Endothelial cell of umbilical vein (primary cell): ENCODE measurements at regions of chr22 and their contacts with region 1.

Region 1: GRCh38 chr22:50620593-50621355 is 7.2 kb downstream of the ARSA start:
- DNase-seq: peak; percentile 90
- H3K4me3 ChIP-seq: no peak overlapping the region
- H3K27ac ChIP-seq: no peak overlapping the region
- H3K4me1 ChIP-seq: peaks cover 14% of the 10 kb centered on the region
- H3K27me3 ChIP-seq: no peaks in the 10 kb centered on the region
- CTCF ChIP-seq: no peak
- POLR2A ChIP-seq: no peak

Region 2: GRCh38 chr22:50244420-50245213 is 376.2 kb before region 1 on chr22 and contains the start of gene TUBGCP6:
- CTCF ChIA-PET with region 1: interaction called, 4 read pairs
- POLR2A ChIA-PET with region 1: no interaction called
- dilution Hi-C with region 1: no loop called
- intact Hi-C with region 1: loop called (anchors 1 kb)
- DNase-seq: peak; percentile 88
- H3K4me3 ChIP-seq: peak within 1 kb of the TSS; percentile 55 to 98 (median 90)
- H3K27ac ChIP-seq: peak within 1 kb of the TSS; percentile 73
- H3K4me1 ChIP-seq: peaks cover 26% of the 10 kb centered on the region
- H3K27me3 ChIP-seq: no peaks in the 10 kb centered on the region
- CTCF ChIP-seq: no peak
- POLR2A ChIP-seq: peak; percentile 83
- total RNA-seq, gene TUBGCP6: 41.5 and 45.3 TPM in 2 replicates

Region 3: GRCh38 chr22:50525390-50526068 is 95.2 kb before region 1 on chr22 and contains the start of gene SCO2:
- CTCF ChIA-PET with region 1: interaction called, 21 read pairs
- POLR2A ChIA-PET with region 1: no interaction called
- dilution Hi-C with region 1: no loop called
- intact Hi-C with region 1: loop called (anchors 1 kb)
- DNase-seq: peak; percentile 98
- H3K4me3 ChIP-seq: peak within 1 kb of the TSS; percentile 47 to 66 (median 48)
- H3K27ac ChIP-seq: peak within 1 kb of the TSS; percentile 57
- H3K4me1 ChIP-seq: peaks cover 16% of the 10 kb centered on the region
- H3K27me3 ChIP-seq: peaks cover 0 to 6% of the 10 kb centered on the region in 2 experiments
- CTCF ChIP-seq: peak; percentile 36 to 70
- POLR2A ChIP-seq: peak; percentile 92
- total RNA-seq, gene SCO2: 3.2 and 3.7 TPM in 2 replicates

Region 4: DNA sequence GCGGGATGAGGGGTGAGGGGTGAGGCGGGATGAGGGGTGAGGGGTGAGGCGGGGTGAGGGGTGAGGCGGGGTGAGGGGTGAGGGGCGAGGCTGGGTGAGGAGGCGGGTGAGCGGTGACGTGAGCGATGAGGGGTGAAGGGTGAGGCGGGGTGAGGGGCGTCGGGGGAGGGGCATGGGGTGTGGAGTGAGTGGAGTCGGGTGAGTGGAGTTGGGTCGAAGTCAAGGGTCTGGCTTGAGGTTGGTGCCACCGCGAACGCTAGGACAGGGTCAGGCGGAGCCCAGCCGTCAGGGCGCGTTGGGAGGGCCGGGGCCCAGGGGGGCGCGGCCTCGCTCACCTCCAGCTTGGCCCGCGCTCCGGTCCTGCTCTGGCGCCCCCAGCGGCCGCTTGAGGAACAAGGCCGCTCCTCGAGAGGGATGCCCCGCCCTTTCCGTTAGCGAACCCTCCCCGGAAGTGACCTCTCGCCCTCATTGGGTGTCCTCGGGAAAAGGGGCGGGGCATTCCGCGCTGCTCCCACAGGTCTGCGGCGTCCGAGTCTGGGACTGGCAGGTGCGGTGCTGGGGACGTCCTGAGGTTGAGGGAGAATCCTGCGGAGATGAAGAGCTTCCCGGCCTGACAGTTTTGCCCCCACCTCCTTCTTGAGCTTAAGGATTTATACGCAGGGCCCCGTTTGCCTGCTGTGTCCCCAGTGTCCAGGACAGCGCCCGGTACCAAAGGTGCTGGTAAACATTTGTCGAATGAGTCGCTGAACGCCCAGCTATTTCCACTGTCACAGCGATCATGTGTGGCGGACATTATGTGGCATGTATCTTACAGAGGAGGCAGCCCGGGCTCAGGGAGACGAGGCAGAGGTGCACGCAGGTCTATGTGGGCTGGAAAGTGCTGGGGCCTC is 58.0 kb before region 1 on chr22 and contains the start of gene SYCE3:
- CTCF ChIA-PET with region 1: interaction called, 11 read pairs
- POLR2A ChIA-PET with region 1: no interaction called
- dilution Hi-C with region 1: no loop called
- intact Hi-C with region 1: no loop called
- DNase-seq: peak; percentile 73
- H3K4me3 ChIP-seq: peak within 1 kb of the TSS; percentile 1 to 34 (median 16)
- H3K27ac ChIP-seq: no peak within 1 kb of the TSS
- H3K4me1 ChIP-seq: peaks cover 5% of the 10 kb centered on the region
- H3K27me3 ChIP-seq: peaks cover 8 to 16% of the 10 kb centered on the region in 2 experiments
- CTCF ChIP-seq: peak; percentile 92 to 93
- POLR2A ChIP-seq: no peak
- total RNA-seq, gene SYCE3: not detected in 2 replicates

Region 5: DNA sequence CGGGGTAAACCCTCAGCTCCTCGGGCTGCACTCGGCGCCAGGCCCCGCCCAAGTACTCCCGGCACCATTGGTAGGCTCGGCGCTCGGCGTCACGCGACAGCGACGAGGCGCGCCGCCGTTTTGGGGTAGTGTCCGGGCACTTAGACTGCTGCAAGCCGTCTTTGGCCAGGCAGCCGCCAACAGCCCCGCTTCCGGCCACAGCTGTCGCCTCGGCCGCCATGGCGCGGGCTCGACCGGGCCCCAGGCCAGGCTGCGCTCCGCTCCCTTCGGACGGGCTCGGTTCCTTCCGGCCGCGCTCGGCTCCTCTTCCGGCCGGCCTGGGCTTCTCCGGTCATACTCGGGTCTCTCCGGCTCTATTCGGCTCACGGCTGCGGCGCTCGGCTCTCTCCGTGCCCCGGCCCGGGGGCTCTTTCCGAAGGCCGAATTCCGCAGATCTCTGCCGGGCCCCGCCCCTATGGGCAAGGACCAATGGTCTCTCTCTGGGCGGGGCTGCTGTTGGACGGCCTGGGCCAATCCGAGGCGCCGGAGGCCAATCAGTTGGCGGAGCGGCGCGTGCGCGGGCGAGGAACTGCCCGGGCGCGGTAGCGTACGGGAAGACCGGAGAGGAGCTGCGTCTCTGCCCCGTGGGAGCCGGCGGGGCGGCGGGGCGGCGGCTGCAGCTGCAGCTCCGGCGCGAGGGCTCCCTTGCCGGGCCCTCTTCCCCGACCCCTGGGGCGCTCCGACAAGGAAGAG is 38.0 kb before region 1 on chr22 and contains the start of gene CHKB:
- CTCF ChIA-PET with region 1: interaction called, 91 read pairs
- POLR2A ChIA-PET with region 1: no interaction called
- dilution Hi-C with region 1: no loop called
- intact Hi-C with region 1: no loop called
- DNase-seq: peak; percentile 98
- H3K4me3 ChIP-seq: peak within 1 kb of the TSS; percentile 73 to 87 (median 85)
- H3K27ac ChIP-seq: peak within 1 kb of the TSS; percentile 87
- H3K4me1 ChIP-seq: peaks cover 13% of the 10 kb centered on the region
- H3K27me3 ChIP-seq: peaks cover 0 to 2% of the 10 kb centered on the region in 2 experiments
- CTCF ChIP-seq: no peak
- POLR2A ChIP-seq: peak; percentile 77
- total RNA-seq, gene CHKB: 57.7 and 62.4 TPM in 2 replicates

Region 6: DNA sequence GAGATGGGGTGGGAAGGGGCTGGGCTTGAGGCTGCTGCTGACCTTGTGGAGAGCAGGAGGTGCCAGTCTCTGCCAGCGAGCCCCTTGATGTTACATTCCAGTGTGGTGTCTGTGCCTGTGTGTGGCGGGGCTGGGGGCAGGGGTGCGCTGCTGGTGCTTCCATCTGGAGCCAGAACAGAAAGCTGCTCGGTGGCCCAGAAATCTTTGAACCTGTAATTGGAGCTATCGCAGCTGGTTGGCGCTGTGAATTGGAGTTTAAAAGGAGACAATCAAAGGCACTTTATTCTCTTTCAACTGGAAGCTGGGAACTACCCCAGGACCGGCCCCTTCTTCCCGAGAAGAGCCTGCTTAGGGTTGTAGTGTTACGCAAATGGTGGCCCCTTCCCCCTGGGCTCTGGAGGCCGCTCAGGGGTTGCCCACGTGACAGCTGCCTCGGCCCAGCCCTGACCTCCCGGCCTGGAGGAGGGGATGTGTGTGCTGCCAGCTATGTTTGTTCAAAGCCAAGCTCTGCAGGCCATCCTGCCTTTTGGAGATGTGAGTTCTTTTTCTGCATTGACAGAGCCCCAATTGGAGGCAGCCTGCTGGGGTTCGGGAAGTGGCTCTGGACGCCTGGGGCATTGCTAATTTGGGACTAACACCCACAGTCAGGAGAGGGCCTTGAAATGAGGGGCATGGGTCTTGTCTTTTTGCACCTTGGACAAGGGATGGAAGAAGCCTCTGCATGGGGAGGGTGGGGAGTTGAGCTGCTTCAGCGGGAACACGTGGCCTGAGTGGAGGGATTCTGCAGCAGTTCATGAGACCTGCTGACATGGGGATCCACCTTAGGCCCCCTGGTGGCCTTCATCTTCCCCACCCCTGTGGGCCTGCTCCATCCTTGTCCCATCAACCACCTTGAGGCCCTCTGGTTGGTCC is 21.2 kb after region 1 on chr22:
- CTCF ChIA-PET with region 1: interaction called, 23 read pairs
- POLR2A ChIA-PET with region 1: interaction called, 7 read pairs
- dilution Hi-C with region 1: no loop called
- intact Hi-C with region 1: no loop called
- DNase-seq: peak; percentile 74
- H3K4me3 ChIP-seq: no peak overlapping the region
- H3K27ac ChIP-seq: no peak overlapping the region
- H3K4me1 ChIP-seq: peaks cover 14% of the 10 kb centered on the region
- H3K27me3 ChIP-seq: peaks cover 23 to 24% of the 10 kb centered on the region in 2 experiments
- CTCF ChIP-seq: peak; percentile 47 to 56
- POLR2A ChIP-seq: no peak

Region 7: DNA sequence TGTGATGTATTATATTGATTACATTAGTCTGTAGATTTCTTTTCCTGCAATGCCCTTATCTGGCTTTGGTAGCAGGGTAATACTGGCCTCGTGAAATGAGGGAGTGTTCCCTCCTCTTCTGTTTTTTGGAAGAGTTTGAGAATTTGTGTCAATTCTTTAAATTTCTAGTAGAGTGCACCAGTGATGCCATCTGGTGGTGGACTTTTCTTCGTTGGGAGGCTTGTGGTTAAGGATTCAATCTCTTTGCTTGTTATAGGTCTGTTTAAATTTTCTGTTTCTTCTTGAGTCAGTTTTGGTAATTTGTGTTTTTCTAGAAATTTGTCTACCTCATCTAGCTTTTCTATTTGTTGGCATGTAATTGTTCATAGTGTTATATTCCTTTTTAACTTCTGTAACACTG is 70.7 kb after region 1 on chr22:
- CTCF ChIA-PET with region 1: interaction called, 26 read pairs
- POLR2A ChIA-PET with region 1: no interaction called
- dilution Hi-C with region 1: no loop called
- intact Hi-C with region 1: loop called (anchors 1 kb)
- DNase-seq: peak; percentile 61
- H3K4me3 ChIP-seq: no peak overlapping the region
- H3K27ac ChIP-seq: no peak overlapping the region
- H3K4me1 ChIP-seq: peaks cover 16% of the 10 kb centered on the region
- H3K27me3 ChIP-seq: no peaks in the 10 kb centered on the region
- CTCF ChIP-seq: peak; percentile 44 to 47
- POLR2A ChIP-seq: no peak